ENCODE measurements at regions of chr6 and their contacts with region 1.

Region 1: GRCh38 chr6:139533573-139534471 is 159.4 kb upstream of the CITED2 start:
- DNase-seq: peak in 2 of 5 donors; percentile 6 to 10
- H3K4me3 ChIP-seq: no peak overlapping the region
- H3K4me3 Mint-ChIP-seq: peak overlapping the region; percentile 28 to 93 (median 76)
- H3K27ac ChIP-seq: peak overlapping the region; percentile 39
- H3K27ac Mint-ChIP-seq: peak overlapping the region; percentile 83 to 96 (median 92)
- H3K4me1 ChIP-seq: peaks cover 84% of the 10 kb centered on the region
- H3K4me1 Mint-ChIP-seq: peaks cover 47 to 76% (median 59%) of the 10 kb centered on the region in 4 donors
- H3K27me3 ChIP-seq: no peaks in the 10 kb centered on the region
- H3K27me3 Mint-ChIP-seq: no peaks in the 10 kb centered on the region

Region 2: DNA sequence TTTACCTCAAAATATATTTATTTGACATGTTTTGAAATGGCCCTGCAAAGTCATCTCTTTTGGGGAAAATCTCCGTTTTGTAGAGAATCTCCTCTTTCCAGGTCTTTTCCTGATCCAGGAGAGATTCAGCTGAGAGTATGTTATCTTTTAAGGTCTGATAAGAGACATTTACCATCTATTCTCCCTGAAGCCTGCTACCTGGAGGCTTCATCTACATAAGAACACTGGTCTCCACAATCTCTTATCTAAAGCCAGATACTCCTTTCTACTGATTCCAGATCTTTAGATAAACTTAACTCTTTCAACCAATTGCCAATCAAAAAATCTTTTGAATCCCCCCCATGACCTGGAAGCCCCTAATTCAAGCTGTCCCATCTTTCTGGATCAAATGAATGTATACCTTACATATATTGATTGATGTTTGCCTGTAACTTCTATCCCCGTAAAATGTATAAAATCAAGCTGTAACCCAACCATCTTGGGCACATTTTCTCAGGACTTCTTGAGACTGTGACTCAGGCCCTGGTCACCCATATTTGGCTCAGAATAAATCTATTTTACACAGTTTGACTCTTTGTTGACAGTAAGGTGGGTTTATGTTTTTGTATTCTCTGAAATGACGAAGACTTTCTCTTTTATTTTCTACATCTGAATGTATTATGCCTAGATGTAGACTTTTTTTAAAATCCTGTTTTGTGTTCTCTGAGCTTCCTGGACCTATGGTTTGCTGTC is 642.4 kb before region 1 on chr6:
- CTCF ChIA-PET with region 1: no interaction called
- POLR2A ChIA-PET with region 1: no interaction called
- intact Hi-C with region 1: no loop called
- DNase-seq: no peak
- H3K4me3 ChIP-seq: no peak overlapping the region
- H3K4me3 Mint-ChIP-seq: no peak overlapping the region
- H3K27ac ChIP-seq: no peak overlapping the region
- H3K27ac Mint-ChIP-seq: no peak overlapping the region
- H3K4me1 ChIP-seq: no peaks in the 10 kb centered on the region
- H3K4me1 Mint-ChIP-seq: no peaks in the 10 kb centered on the region
- H3K27me3 ChIP-seq: no peaks in the 10 kb centered on the region
- H3K27me3 Mint-ChIP-seq: no peaks in the 10 kb centered on the region

Region 3: GRCh38 chr6:139473231-139473701 is 60.6 kb before region 1 on chr6:
- CTCF ChIA-PET with region 1: interaction called, 3 read pairs
- POLR2A ChIA-PET with region 1: interaction called, 8 read pairs
- intact Hi-C with region 1: loop called (anchors 2 kb)
- DNase-seq: no peak
- H3K4me3 ChIP-seq: no peak overlapping the region
- H3K4me3 Mint-ChIP-seq: no peak overlapping the region
- H3K27ac ChIP-seq: no peak overlapping the region
- H3K27ac Mint-ChIP-seq: peak overlapping the region in 1 of 7 donors; percentile 7
- H3K4me1 ChIP-seq: peaks cover 18% of the 10 kb centered on the region
- H3K4me1 Mint-ChIP-seq: peaks cover 9 to 21% (median 13%) of the 10 kb centered on the region in 4 donors
- H3K27me3 ChIP-seq: no peaks in the 10 kb centered on the region
- H3K27me3 Mint-ChIP-seq: peaks cover 0 to 2% of the 10 kb centered on the region in 2 donors

Region 4: DNA sequence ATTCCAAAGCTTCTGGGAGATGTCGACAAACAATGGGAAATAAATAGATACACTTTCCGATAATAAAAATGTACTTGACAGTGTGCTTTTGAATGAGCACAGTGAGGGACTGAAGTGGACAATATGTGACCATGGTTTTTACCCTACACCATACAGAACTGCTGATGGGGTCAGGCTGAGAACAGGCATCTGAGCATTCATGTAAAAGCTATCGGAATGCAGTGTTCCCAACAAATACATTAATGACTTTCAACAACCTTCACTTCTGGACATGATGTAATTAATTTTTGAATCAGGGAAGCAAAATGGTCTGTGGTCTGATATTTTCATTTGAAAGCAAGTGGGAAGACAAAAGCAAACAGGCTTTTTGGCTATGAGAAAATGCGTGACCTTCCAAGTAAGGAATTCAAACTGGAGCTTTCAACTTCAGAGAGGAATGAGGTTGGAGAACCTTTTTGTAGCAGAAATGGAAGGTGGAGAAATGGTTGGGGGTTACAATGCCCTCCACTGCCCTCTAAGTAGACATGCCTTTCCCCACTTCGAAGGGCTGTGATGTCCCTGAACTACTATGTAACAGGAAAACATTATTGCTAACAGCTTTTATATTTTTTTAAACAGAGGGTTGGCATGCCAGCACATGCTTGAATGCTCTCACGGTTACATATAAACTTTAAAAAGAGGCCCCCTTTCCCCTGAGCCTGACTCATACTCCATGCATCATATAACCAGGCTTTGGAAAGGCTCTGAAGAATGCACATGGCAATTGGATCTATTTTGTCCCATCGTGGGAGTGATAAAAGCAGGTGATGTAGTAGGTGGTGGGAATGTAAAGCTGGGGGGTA is 44.2 kb after region 1 on chr6:
- CTCF ChIA-PET with region 1: no interaction called
- POLR2A ChIA-PET with region 1: interaction called, 6 read pairs
- intact Hi-C with region 1: loop called (anchors 5 kb)
- DNase-seq: no peak
- H3K4me3 ChIP-seq: no peak overlapping the region
- H3K4me3 Mint-ChIP-seq: no peak overlapping the region
- H3K27ac ChIP-seq: no peak overlapping the region
- H3K27ac Mint-ChIP-seq: no peak overlapping the region
- H3K4me1 ChIP-seq: peaks cover 16% of the 10 kb centered on the region
- H3K4me1 Mint-ChIP-seq: peaks cover 16 to 21% (median 19%) of the 10 kb centered on the region in 4 donors
- H3K27me3 ChIP-seq: no peaks in the 10 kb centered on the region
- H3K27me3 Mint-ChIP-seq: no peaks in the 10 kb centered on the region

Region 5: DNA sequence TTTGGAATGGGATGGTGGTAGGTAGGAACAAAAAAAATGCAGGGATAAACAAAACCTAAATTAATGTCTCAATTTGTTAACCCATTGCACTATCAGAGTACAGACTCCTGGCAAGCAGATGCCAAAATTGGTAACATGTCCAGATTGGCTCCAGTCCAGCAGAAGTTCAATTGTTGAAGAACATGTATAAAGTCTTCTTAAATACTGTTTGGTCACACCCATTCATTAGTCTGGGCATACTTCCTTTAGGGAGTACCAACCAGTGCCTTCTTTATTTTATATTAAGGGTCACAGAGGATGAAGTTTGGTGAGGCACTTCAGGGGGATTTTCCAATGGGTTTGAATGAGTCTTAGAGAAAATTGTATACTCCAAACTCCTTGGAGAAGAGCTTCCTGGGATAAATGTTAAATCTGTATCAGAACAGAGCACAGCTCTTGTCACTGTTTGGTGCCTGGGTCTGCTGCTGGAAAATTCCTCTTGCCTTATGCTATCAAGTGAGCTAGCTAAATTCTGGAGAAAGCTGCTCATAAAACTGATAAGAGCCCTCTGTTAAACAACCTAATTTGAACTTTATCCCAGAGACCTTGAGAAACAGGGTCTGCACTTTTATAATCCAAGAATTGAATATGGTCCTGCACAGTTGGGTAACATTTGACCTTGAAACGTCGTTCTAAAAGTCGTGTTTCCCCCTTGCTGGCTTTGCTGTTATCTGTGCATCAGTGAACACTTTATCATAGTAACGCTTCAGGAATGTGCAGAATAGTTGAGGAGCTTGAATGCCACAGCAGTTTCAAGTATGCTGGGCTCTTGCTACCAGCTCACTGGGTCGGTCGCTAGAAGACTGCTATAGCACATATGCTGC is 174.7 kb after region 1 on chr6:
- CTCF ChIA-PET with region 1: no interaction called
- POLR2A ChIA-PET with region 1: no interaction called
- intact Hi-C with region 1: no loop called
- DNase-seq: no peak
- H3K4me3 ChIP-seq: no peak overlapping the region
- H3K4me3 Mint-ChIP-seq: no peak overlapping the region
- H3K27ac ChIP-seq: no peak overlapping the region
- H3K27ac Mint-ChIP-seq: no peak overlapping the region
- H3K4me1 ChIP-seq: no peaks in the 10 kb centered on the region
- H3K4me1 Mint-ChIP-seq: no peaks in the 10 kb centered on the region
- H3K27me3 ChIP-seq: no peaks in the 10 kb centered on the region
- H3K27me3 Mint-ChIP-seq: peaks cover 0 to 1% of the 10 kb centered on the region in 2 donors

Region 6: GRCh38 chr6:139863346-139863745 is 329.5 kb after region 1 on chr6:
- CTCF ChIA-PET with region 1: no interaction called
- POLR2A ChIA-PET with region 1: no interaction called
- intact Hi-C with region 1: no loop called
- DNase-seq: no peak
- H3K4me3 ChIP-seq: no peak overlapping the region
- H3K4me3 Mint-ChIP-seq: no peak overlapping the region
- H3K27ac ChIP-seq: no peak overlapping the region
- H3K27ac Mint-ChIP-seq: no peak overlapping the region
- H3K4me1 ChIP-seq: no peaks in the 10 kb centered on the region
- H3K4me1 Mint-ChIP-seq: no peaks in the 10 kb centered on the region
- H3K27me3 ChIP-seq: no peaks in the 10 kb centered on the region
- H3K27me3 Mint-ChIP-seq: peaks cover 0 to 7% of the 10 kb centered on the region in 2 donors

Measured in CD4-positive, alpha-beta memory T cell (primary cell).